Heart right ventricle (tissue), 16 donors: ENCODE measurements at regions of chr9 and their contacts with region 1.

Region 1: DNA sequence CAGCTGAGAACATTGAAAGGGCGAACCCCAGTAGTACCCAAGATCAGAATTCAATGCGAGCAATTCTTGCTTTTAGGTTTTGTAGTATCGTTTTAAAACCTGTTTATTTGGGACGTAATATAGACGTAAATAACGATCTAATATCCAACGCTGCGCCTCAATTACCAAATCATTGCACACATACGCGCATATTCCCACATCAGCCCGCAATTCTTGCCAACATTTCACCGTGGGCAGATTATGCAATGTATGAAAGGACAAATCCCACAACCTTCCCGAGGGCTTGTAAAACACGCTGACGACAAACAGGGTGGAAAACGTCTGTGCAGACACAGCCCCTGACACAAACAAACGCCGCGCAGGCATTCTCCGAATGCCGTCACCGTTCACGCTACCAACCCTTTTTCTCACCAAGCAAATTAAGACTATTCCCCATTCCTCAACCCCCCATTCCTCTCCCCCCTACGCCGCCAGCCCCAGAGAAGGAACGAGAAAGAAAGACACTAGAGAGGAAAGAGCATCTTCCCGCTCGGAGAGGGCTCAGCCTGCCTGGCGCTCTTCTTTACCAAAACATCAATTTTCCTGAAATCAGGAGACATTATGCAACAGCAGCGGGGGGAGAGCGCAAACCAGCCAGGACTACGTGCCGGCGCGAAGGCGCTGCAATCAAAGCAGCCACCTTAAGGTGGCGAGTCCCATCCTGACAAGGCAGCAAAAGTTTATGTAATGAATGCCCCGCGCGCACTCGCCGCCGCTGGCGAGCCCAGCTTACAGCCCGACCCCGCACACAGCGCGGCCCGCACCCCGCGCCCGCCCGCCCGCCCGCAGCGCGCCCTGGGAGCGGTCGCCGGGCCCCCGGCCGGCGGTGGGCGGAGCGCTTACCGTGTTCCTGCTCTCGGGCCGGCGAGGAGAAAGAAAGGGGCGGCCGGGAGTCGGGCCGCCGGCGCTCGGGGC is 597 bp downstream of the NFIL3 start:
- DNase-seq: peak; percentile 54 to 65
- ATAC-seq: peak in 6 of 8 donors; percentile 6 to 51 (median 33)
- H3K4me3 ChIP-seq: peak overlapping the region; percentile 48 to 83 (median 68)
- H3K27ac ChIP-seq: peak overlapping the region; percentile 85 to 96 (median 92)
- H3K4me1 ChIP-seq: peaks cover 0 to 73% (median 33%) of the 10 kb centered on the region in 9 donors
- H3K27me3 ChIP-seq: no peaks in the 10 kb centered on the region
- CTCF ChIP-seq: peak in 6 of 9 donors; percentile 8 to 44 (median 26)

Region 2: DNA sequence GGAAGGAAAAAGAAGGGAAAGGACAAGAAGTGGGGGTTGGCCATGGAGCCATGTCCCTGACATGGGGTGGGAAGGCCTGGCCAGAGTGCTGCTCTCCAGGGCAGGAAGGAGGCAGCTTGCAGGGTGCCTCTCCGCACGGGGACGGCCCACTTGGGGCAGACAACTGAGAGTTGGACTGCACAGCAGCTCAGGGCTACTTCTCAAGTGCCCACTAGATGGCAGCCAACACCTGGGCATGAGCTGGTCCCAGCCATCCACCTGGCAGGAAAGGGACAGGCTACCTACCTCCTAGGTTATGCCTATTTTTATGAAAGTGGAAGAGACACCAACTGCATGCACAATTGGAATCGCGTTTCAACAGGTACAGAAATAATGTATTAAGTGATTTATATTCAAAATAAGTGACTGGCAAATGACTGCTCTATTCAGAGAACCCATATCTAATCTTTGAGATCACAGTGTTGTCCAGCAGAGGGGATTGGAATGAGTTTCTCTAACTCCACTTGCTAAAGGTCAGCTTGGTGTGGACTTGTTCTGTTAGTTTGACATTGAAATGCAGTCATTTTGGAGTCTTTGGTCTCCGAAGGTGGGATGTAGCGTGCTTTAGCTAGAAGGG is 508.1 kb before region 1 on chr9:
- intact Hi-C with region 1: loop called in 4 of 10 experiments (anchors 5 to 10 kb)
- DNase-seq: peak; percentile 62 to 66
- ATAC-seq: peak; percentile 79 to 95 (median 87)
- H3K4me3 ChIP-seq: no peak overlapping the region
- H3K27ac ChIP-seq: no peak overlapping the region
- H3K4me1 ChIP-seq: peaks cover 0 to 5% (median 1%) of the 10 kb centered on the region in 9 donors
- H3K27me3 ChIP-seq: peaks cover 0 to 13% (median 0%) of the 10 kb centered on the region in 7 donors
- CTCF ChIP-seq: peak; percentile 81 to 92 (median 92)

Region 3: GRCh38 chr9:91089405-91090129 is 333.5 kb before region 1 on chr9:
- intact Hi-C with region 1: loop called in 4 of 10 experiments (anchors 5 to 10 kb)
- DNase-seq: peak in 1 of 2 donors; percentile 21
- ATAC-seq: peak; percentile 65 to 85 (median 80)
- H3K4me3 ChIP-seq: no peak overlapping the region
- H3K27ac ChIP-seq: no peak overlapping the region
- H3K4me1 ChIP-seq: peaks cover 0 to 17% (median 0%) of the 10 kb centered on the region in 9 donors
- H3K27me3 ChIP-seq: no peaks in the 10 kb centered on the region
- CTCF ChIP-seq: peak in 7 of 9 donors; percentile 49 to 70 (median 60)

Region 4: GRCh38 chr9:91164724-91165520 is 258.1 kb before region 1 on chr9:
- intact Hi-C with region 1: no loop called
- DNase-seq: peak; percentile 26 to 64
- ATAC-seq: peak in 7 of 8 donors; percentile 40 to 77 (median 48)
- H3K4me3 ChIP-seq: no peak overlapping the region
- H3K27ac ChIP-seq: peak overlapping the region in 1 of 10 donors; percentile 70
- H3K4me1 ChIP-seq: peaks cover 0 to 50% (median 12%) of the 10 kb centered on the region in 9 donors
- H3K27me3 ChIP-seq: no peaks in the 10 kb centered on the region
- CTCF ChIP-seq: no peak

Region 5: GRCh38 chr9:91273853-91274552 is 149.0 kb before region 1 on chr9:
- intact Hi-C with region 1: loop called in 1 of 10 experiments (anchors 10 kb)
- DNase-seq: no peak
- ATAC-seq: peak in 1 of 8 donors; percentile 71
- H3K4me3 ChIP-seq: no peak overlapping the region
- H3K27ac ChIP-seq: no peak overlapping the region
- H3K4me1 ChIP-seq: peaks cover 0 to 13% (median 6%) of the 10 kb centered on the region in 9 donors
- H3K27me3 ChIP-seq: no peaks in the 10 kb centered on the region
- CTCF ChIP-seq: no peak

Region 6: GRCh38 chr9:91483189-91483691 is 60.2 kb after region 1 on chr9:
- intact Hi-C with region 1: loop called in 1 of 10 experiments (anchors 5 kb)
- DNase-seq: peak; percentile 37 to 72
- ATAC-seq: peak; percentile 85 to 96 (median 94)
- H3K4me3 ChIP-seq: peak overlapping the region in 6 of 10 donors; percentile 14 to 28 (median 20)
- H3K27ac ChIP-seq: peak overlapping the region; percentile 61 to 95 (median 86)
- H3K4me1 ChIP-seq: peaks cover 0 to 31% (median 7%) of the 10 kb centered on the region in 9 donors
- H3K27me3 ChIP-seq: peaks cover 0 to 4% (median 0%) of the 10 kb centered on the region in 7 donors
- CTCF ChIP-seq: no peak

Region 7: DNA sequence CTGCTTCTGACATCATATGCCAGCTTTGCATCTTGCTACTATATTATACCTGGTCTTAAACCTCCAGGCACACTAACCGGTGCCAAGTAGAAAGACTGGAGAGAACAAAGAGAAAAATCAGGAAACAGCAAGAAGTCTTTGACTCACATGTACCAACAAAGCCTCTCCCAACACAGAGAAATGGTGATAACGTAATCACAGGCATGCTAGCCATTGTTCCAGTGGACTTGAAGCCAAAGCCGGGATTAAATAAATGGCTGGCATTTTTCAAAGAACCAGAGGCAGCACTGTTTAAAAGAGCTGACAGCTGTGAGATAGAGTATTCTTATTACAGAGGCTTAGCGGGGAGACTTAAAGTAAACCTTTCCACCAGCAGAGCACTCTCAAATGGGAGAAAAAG is 149.0 kb after region 1 on chr9:
- intact Hi-C with region 1: no loop called
- DNase-seq: no peak
- ATAC-seq: peak in 5 of 8 donors; percentile 19 to 90 (median 62)
- H3K4me3 ChIP-seq: no peak overlapping the region
- H3K27ac ChIP-seq: peak overlapping the region in 4 of 10 donors; percentile 27 to 41 (median 30)
- H3K4me1 ChIP-seq: peaks cover 0 to 7% (median 0%) of the 10 kb centered on the region in 9 donors
- H3K27me3 ChIP-seq: no peaks in the 10 kb centered on the region
- CTCF ChIP-seq: no peak

Region 8: GRCh38 chr9:91727316-91727861 is 304.4 kb after region 1 on chr9:
- intact Hi-C with region 1: loop called in 1 of 10 experiments (anchors 5 kb)
- DNase-seq: no peak
- ATAC-seq: peak; percentile 43 to 74 (median 60)
- H3K4me3 ChIP-seq: no peak overlapping the region
- H3K27ac ChIP-seq: peak overlapping the region in 4 of 10 donors; percentile 17 to 42 (median 32)
- H3K4me1 ChIP-seq: peaks cover 0 to 9% (median 0%) of the 10 kb centered on the region in 9 donors
- H3K27me3 ChIP-seq: no peaks in the 10 kb centered on the region
- CTCF ChIP-seq: peak; percentile 40 to 74 (median 70)